Vagina (tissue), 2 donors: ENCODE measurements at regions of chr1 and their contacts with region 1.

Region 1: DNA sequence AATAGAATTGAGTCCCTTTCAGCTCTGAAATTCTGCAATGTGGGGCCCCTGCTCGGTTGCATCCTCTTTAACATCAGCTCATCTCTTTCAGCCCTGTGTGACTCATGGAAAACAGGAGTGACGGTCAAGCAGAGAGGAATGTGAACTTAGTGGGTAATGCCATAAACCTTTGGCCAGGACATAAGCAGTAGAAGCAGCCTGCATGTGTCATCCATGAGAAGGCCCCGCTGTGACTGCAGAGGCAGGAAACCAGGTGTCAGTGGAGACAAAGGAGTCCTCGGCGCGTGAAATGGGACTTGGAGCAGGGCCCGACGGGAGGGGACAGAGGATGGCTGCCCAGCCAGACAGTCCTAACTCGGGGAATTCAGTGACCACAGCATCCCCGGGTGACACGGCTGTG is 21.1 kb upstream of the EPHB2 start:
- DNase-seq: no peak
- H3K4me3 ChIP-seq: no peak overlapping the region
- H3K27ac ChIP-seq: no peak overlapping the region
- H3K4me1 ChIP-seq: no peaks in the 10 kb centered on the region
- H3K27me3 ChIP-seq: no peaks in the 10 kb centered on the region
- CTCF ChIP-seq: no peak
- POLR2A ChIP-seq: no peak

Region 2: DNA sequence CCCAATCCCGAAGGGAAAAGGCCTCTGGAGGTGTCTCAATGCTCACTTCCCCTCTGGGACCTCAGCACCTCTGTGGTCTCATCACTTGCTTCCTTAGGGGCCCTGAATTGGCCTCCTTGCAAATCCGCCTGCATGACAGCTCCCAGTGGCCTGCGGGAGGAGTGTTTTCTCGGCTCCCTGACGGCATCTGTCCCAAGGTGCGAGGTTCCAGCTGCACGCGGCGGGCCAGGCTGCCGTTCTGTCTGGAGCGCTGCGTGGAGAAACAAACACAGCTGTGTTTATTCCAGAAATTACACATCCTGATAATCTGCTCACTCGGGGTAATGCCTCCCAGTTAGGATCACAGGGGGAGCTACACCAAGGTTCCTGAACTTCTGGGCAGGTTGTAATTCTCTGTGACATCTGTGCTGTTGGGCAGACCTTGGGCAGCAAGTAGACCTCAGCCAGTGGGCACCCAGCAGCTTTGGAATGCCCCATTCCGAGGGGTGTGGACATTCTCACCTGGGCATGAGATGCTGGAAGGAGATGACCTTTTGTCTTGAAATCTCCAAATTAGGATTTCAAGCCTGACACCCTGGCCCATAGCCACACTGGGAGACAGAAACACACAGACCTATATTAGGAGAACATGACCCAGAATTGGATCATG is 39.4 kb after region 1 on chr1:
- intact Hi-C with region 1: loop called (anchors 1 kb)
- DNase-seq: no peak
- H3K4me3 ChIP-seq: no peak overlapping the region
- H3K27ac ChIP-seq: no peak overlapping the region
- H3K4me1 ChIP-seq: peaks cover 9% of the 10 kb centered on the region
- H3K27me3 ChIP-seq: no peaks in the 10 kb centered on the region
- CTCF ChIP-seq: no peak
- POLR2A ChIP-seq: no peak

Region 3: DNA sequence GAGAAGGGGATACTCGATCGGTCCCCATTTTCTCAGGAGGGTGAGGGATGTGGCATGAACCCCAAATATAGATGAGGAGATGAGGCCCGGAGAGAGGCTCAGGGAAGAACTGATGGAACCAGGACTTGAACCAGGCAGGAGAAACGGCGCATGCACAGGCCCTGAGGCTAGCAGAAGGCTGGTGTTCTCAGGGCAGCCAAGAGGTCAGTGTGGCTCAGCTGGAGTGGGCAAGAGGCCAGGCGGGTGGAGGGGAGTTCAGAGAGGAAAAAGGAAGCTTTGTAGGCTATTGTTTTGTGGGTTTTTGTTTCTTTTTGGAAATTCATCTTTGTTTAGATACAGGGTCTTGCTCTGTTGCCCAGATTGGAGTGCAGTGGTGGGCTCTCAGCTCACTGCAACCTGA is 161.2 kb after region 1 on chr1:
- intact Hi-C with region 1: no loop called
- DNase-seq: no peak
- H3K4me3 ChIP-seq: no peak overlapping the region
- H3K27ac ChIP-seq: no peak overlapping the region
- H3K4me1 ChIP-seq: peaks cover 5% of the 10 kb centered on the region
- H3K27me3 ChIP-seq: no peaks in the 10 kb centered on the region
- CTCF ChIP-seq: no peak
- POLR2A ChIP-seq: no peak